ENCODE measurements at regions of chr7 and their contacts with region 1.

Region 1: DNA sequence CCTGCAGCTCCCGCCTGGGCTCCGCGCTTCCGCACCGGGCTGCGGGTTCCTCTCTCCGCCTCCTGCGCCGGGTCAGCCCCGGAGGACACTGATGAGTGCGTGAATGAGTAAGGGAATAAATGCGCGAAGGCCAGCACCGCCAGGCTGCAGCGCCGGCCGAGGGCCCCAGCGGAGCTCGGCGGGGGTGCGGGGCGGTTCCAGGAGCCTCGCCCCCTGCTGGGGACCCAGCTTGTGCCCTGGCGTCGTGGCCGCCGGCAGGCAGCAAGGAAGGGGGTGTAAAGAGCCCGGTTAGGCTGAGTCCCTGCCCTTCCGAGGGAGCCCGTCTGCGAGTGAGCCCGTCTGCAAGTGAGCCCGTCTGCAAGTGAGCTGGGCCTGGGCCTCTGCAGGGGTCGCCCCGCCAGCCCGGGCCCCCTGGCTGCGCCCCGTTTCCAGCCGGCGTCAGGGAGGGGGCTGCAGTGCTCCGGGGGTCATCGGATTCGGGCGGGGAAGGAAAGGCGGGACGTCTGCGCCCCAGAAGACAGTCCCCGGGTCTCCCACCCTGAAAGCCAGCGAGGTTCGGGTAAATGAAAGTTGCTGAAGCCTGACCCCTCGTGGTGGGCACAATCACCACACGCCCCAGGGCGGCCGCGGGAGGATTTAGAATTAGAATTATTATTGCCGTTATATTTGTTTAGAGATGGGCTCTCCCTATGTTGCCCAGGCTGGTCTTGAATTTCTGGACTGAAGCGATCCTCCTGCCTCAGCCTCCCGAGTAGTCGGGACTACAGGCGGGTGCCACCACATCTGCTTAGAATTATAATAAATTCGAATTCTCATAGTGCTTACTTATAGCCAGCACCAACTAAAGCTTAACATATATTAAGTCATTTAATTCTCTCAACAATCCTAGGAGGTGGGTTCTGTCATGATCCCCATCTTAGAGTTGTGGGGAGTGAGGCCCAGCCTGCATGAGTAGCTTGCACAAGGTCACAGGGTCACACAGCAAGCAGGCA is 8.6 kb upstream of the CRYGN start:
- DNase-seq: peak; percentile 20
- ATAC-seq: peak; percentile 87
- H3K4me3 ChIP-seq: peak overlapping the region; percentile 50 to 69 (median 52); a peak in 5 of 6 replicates
- H3K27ac ChIP-seq: no peak overlapping the region
- H3K4me1 ChIP-seq: no peaks in the 10 kb centered on the region
- H3K27me3 ChIP-seq: peaks cover 6 to 30% of the 10 kb centered on the region in 2 experiments; a peak in 4 of 5 replicates
- CTCF ChIP-seq: peak; percentile 80
- EP300 ChIP-seq: no peak
- POLR2A ChIP-seq: no peak
- RAD21 ChIP-seq: peak; percentile 80

Region 2: DNA sequence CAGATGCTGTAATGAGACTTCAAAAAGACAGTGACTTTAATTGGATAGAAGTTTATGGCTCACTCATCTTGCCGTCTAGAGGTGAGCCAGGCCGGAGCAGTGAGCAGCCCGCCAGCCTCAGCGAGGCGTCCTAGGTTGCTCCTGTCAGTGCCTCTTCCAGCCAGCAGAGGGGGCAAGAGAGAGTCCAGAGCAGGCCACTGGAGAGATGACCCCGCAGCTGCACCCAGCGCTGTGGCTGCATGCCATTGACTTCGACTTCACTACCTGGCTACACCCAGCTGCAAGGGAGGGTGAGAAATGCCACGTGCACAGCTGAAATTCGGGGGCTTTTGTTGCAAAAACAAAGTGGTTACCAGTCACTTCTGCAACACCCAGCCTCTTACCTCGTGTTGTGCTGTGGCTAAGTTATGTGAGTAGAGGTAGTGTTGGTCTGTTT is 80.4 kb before region 1 on chr7:
- CTCF ChIA-PET with region 1: interaction called, 33 read pairs
- POLR2A ChIA-PET with region 1: no interaction called
- in situ Hi-C with region 1: loop called (anchors 5 kb)
- intact Hi-C with region 1: loop called (anchors 1 kb)
- DNase-seq: peak; percentile 68
- ATAC-seq: peak; percentile 100
- H3K4me3 ChIP-seq: no peak overlapping the region
- H3K27ac ChIP-seq: no peak overlapping the region
- H3K4me1 ChIP-seq: no peaks in the 10 kb centered on the region
- H3K27me3 ChIP-seq: no peaks in the 10 kb centered on the region
- CTCF ChIP-seq: peak; percentile 95
- EP300 ChIP-seq: no peak
- POLR2A ChIP-seq: no peak
- RAD21 ChIP-seq: peak; percentile 89

Region 3: GRCh38 chr7:151408839-151409666 is 39.5 kb before region 1 on chr7:
- CTCF ChIA-PET with region 1: no interaction called
- POLR2A ChIA-PET with region 1: no interaction called
- in situ Hi-C with region 1: no loop called
- intact Hi-C with region 1: loop called (anchors 5 kb)
- DNase-seq: peak; percentile 66
- ATAC-seq: peak; percentile 56
- H3K4me3 ChIP-seq: peak overlapping the region in 2 of 3 experiments; percentile 65 to 76; a peak in 3 of 6 replicates
- H3K27ac ChIP-seq: peak overlapping the region; percentile 46
- H3K4me1 ChIP-seq: peaks cover 56% of the 10 kb centered on the region
- H3K27me3 ChIP-seq: peaks cover 2 to 58% of the 10 kb centered on the region in 2 experiments
- CTCF ChIP-seq: peak; percentile 42
- EP300 ChIP-seq: no peak
- POLR2A ChIP-seq: no peak
- RAD21 ChIP-seq: no peak

Region 4: DNA sequence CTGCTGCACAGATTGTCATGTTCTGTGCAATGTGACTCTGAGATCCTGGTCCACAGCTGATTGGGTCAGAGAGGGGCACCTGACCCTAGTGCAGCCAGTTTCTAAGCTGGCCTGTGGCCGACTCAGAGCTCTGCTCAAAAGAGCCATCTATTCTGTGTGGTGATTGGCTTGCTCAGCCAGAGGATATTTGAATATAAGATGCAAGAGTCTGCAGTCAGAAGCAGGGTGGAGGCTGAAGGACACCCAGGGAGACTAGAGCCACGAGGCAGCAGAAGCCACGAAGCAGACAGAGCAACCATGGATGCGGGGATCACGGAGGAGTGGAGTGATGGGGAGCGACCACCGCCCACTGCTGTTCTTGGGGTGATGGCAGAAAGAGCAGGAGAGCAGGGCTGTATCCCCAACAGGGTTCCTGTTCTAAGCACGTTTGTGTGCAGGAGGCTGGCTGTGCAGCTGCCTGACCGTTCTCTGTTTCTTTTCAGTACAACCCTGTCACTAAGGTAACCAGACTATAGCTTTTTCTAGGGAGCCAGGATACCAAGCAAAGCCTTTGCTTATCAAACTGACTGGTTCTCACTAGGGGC is 90.6 kb after region 1 on chr7:
- CTCF ChIA-PET with region 1: no interaction called
- POLR2A ChIA-PET with region 1: no interaction called
- in situ Hi-C with region 1: no loop called
- intact Hi-C with region 1: no loop called
- DNase-seq: no peak
- ATAC-seq: peak; percentile 67
- H3K4me3 ChIP-seq: no peak overlapping the region
- H3K27ac ChIP-seq: no peak overlapping the region
- H3K4me1 ChIP-seq: no peaks in the 10 kb centered on the region
- H3K27me3 ChIP-seq: peaks cover 2 to 30% of the 10 kb centered on the region in 2 experiments; a peak in 4 of 5 replicates
- CTCF ChIP-seq: no peak
- EP300 ChIP-seq: no peak
- POLR2A ChIP-seq: no peak
- RAD21 ChIP-seq: no peak

Measured in HepG2 (cell line).